ENCODE measurements at regions of chr22 and their contacts with region 1.

Region 1: GRCh38 chr22:22687638-22688500 is 43.5 kb downstream of the GGTLC2 start:
- DNase-seq: peak; percentile 90 to 93 (median 91)
- ATAC-seq: peak; percentile 92
- H3K4me3 ChIP-seq: no peak overlapping the region
- H3K27ac ChIP-seq: no peak overlapping the region
- H3K4me1 ChIP-seq: no peaks in the 10 kb centered on the region
- H3K27me3 ChIP-seq: peaks cover 0 to 18% of the 10 kb centered on the region in 2 experiments; a peak in 2 of 5 replicates
- CTCF ChIP-seq: no peak
- EP300 ChIP-seq: no peak
- POLR2A ChIP-seq: no peak
- RAD21 ChIP-seq: no peak

Region 2: DNA sequence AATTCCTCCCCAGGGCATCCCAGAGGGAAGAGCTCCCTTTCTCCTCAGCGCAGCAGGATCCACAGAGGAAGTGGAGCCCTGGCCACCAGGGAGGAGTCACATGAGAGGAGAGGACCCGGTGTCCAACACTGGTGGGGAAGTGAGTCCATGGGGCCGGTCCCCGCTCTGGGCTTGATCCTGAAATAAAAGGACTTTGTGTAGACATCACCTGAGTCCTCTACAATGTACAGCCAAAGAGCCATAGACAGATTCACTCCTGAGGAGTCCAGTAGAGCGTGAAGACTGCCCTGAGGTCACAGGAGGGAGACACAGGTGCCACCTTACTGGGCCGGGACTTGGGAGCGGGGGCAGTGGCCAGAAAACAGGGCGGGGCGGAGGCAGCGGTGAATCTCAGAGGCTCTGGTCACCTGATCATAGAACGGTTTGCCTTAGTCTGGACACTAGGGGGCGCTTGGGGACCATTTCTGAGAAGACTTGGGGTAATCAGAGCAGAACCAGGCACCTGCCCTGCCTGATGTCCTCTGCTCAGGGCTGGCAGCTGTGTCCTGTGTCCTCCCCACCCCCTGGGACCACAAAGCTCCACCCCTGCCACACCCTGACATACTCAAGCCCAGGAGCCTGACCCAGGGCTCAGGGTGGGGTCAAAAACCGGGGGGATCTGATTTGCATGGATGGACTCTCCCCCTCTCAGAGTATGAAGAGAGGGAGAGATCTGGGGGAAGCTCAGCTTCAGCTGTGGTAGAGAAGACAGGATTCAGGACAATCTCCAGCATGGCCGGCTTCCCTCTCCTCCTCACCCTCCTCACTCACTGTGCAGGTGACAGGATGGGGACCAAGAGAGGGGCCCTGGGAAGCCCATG is 330.6 kb before region 1 on chr22:
- CTCF ChIA-PET with region 1: interaction called, 4 read pairs
- POLR2A ChIA-PET with region 1: no interaction called
- in situ Hi-C with region 1: no loop called
- intact Hi-C with region 1: loop called (anchors 10 kb)
- DNase-seq: peak; percentile 99 to 100 (median 100)
- ATAC-seq: peak; percentile 99
- H3K4me3 ChIP-seq: no peak overlapping the region
- H3K27ac ChIP-seq: no peak overlapping the region
- H3K4me1 ChIP-seq: peaks cover 0 to 5% of the 10 kb centered on the region in 2 experiments; a peak in 1 of 5 replicates
- H3K27me3 ChIP-seq: peaks cover 11 to 20% of the 10 kb centered on the region in 2 experiments; a peak in 3 of 5 replicates
- CTCF ChIP-seq: peak; percentile 98 to 100 (median 99)
- EP300 ChIP-seq: peak; percentile 74
- POLR2A ChIP-seq: no peak
- RAD21 ChIP-seq: peak in 1 of 2 experiments; percentile 98; a peak in 3 of 4 replicates

Region 3: DNA sequence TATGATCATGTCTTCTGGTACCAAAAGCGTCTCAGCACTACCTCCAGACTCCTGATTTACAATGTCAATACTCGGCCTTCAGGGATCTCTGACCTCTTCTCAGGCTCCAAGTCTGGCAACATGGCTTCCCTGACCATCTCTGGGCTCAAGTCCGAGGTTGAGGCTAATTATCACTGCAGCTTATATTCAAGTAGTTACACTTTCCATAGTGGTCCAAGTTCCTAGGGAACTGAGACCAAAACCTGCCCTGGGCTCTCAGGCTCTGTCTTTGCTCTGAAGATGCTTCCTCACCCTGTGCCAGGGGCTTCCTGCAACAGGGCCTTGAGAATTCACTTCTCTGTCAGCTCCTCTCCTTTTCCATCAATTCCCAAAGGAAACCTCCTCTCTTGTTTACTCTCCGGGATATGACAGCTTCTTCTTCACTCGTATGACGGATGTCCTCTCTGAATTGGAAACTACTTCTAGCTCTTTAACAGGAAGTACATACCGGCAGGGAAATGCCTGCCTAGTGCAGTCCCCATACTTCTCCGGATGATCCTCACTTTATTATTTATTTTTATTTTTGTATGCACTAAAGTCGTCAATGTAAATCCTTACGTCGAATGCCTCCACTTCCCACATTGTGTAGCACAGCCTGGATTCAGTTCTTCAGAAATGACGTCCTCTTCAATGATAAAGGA is 99.2 kb before region 1 on chr22:
- CTCF ChIA-PET with region 1: interaction called, 60 read pairs
- POLR2A ChIA-PET with region 1: no interaction called
- in situ Hi-C with region 1: no loop called
- intact Hi-C with region 1: no loop called
- DNase-seq: no peak
- ATAC-seq: no peak
- H3K4me3 ChIP-seq: no peak overlapping the region
- H3K27ac ChIP-seq: no peak overlapping the region
- H3K4me1 ChIP-seq: no peaks in the 10 kb centered on the region
- H3K27me3 ChIP-seq: peaks cover 17 to 33% of the 10 kb centered on the region in 2 experiments; a peak in 4 of 5 replicates
- CTCF ChIP-seq: no peak
- EP300 ChIP-seq: no peak
- POLR2A ChIP-seq: no peak
- RAD21 ChIP-seq: no peak

Region 4: DNA sequence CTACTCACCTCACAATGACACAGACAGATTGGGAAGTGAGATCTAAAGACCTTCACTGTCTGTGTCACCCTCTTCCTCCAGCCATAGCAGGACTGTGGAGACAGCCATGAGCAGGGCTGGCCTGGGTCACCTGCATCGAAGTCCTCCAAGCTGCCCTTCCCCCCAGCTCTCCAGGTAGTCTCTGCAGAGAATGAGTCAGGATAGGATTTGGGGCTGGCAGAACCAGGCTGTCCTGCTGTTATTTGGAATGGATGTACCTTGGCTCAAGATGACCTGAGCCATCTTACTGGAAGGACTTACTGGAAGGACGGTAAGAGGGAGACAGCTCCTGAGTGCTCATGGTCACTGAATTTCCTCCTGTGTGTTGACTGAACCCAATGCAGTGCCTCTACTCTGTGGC is 14.2 kb before region 1 on chr22:
- CTCF ChIA-PET with region 1: interaction called, 6 read pairs
- POLR2A ChIA-PET with region 1: interaction called, 23 read pairs
- in situ Hi-C with region 1: no loop called
- intact Hi-C with region 1: no loop called
- DNase-seq: no peak
- ATAC-seq: peak; percentile 23
- H3K4me3 ChIP-seq: no peak overlapping the region
- H3K27ac ChIP-seq: no peak overlapping the region
- H3K4me1 ChIP-seq: no peaks in the 10 kb centered on the region
- H3K27me3 ChIP-seq: peaks cover 33 to 41% of the 10 kb centered on the region in 2 experiments
- CTCF ChIP-seq: no peak
- EP300 ChIP-seq: no peak
- POLR2A ChIP-seq: no peak
- RAD21 ChIP-seq: no peak

Region 5: DNA sequence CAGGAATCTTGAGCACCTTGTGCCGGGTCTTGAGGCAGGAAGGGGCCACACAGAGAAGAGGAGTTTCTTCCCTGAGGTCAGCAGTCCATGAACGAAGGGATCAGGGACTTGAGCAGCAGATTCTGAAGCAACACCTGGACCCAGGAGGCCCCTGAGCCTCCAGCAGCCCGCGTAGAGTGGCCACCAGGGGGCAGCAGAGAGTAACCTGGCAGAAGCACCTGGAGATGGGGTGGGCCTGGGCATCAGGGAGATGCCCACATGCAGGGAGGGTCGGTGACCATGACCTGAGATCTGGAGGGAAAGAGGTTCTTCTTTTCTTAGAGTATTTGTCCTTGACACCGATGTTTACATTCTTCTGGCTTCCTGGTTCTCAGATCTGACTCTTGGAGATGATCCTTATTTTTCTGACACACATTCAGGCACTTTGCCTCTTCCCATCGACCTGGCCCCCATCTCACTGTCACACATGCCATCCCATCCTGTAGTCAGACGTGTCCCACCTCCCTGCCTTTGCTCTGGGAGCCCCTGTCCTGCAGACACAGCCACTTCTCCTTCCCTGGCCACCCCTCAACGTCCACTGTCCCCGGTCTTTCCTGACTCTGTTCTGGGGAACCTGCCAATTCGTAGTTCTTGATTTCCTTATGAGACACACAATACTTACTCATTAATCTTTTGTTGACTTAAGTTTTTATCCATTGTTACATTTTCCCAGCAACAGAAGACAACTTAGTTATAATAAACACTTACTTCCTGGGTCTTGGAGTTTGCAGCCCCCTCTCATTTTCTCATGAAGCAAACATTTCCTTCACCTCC is 23.1 kb after region 1 on chr22:
- CTCF ChIA-PET with region 1: interaction called, 30 read pairs
- POLR2A ChIA-PET with region 1: interaction called, 122 read pairs
- in situ Hi-C with region 1: no loop called
- intact Hi-C with region 1: no loop called
- DNase-seq: peak; percentile 93 to 100 (median 99)
- ATAC-seq: peak; percentile 88
- H3K4me3 ChIP-seq: no peak overlapping the region
- H3K27ac ChIP-seq: no peak overlapping the region
- H3K4me1 ChIP-seq: no peaks in the 10 kb centered on the region
- H3K27me3 ChIP-seq: peaks cover 3 to 20% of the 10 kb centered on the region in 2 experiments; a peak in 2 of 5 replicates
- CTCF ChIP-seq: no peak
- EP300 ChIP-seq: no peak
- POLR2A ChIP-seq: no peak
- RAD21 ChIP-seq: no peak